ENCODE measurements at regions of chr6 and their contacts with region 1.

Region 1: DNA sequence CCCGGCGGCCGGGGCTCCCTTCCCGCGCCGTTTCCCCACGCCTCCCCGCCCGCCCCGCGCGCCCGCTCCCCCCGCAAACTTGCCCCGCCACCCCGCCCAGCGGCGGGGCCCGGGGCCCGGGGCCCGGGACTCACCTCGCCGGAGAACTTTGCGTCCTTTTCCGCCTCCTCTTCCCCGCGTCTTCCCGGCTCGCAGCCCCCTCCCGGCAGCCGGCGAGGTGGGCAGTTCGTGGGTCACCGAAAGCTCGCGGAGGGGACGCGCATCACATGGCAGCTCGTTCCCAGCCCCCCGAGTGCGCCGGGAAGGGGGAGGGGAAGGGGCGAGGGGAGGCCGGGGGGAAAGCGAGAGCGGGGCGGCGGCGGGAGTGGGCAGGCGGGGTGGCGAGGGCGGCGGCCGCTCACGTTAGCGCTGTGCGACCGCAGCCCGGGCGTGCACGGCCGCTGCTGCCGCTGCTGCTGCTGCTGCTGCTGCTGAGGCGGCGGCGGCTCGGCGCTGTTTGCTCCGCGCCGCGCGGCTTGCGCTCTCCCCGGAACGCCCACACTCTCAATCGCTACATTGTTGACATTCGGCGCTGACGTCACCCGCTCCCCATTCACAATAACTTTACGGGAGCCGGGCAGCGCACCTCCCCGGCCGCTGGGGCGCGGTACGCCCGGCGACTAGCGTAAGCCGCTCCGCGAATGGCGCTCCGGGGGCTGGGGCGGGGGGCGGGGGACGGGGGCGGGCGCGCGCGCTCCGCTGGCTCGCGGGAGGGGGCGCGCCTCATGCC is at the start of gene BACH2:
- DNase-seq: peak; percentile 84 to 97 (median 94)
- ATAC-seq: peak; percentile 85
- H3K4me3 ChIP-seq: peak within 1 kb of the TSS; percentile 59
- H3K4me3 Mint-ChIP-seq: peak within 1 kb of the TSS; percentile 79 to 97 (median 92)
- H3K27ac ChIP-seq: peak within 1 kb of the TSS; percentile 95
- H3K27ac Mint-ChIP-seq: peak within 1 kb of the TSS; percentile 89 to 100 (median 97)
- H3K4me1 ChIP-seq: peaks cover 7 to 26% of the 10 kb centered on the region in 2 donors
- H3K4me1 Mint-ChIP-seq: peaks cover 0 to 47% (median 38%) of the 10 kb centered on the region in 7 donors
- H3K27me3 ChIP-seq: no peaks in the 10 kb centered on the region
- H3K27me3 Mint-ChIP-seq: peaks cover 0 to 29% (median 0%) of the 10 kb centered on the region in 5 donors
- total RNA-seq, gene BACH2: 33.0 to 193 (median 133) TPM

Region 2: GRCh38 chr6:89940225-89941027 is 356.1 kb before region 1 on chr6:
- CTCF ChIA-PET with region 1: interaction called, 11 read pairs
- POLR2A ChIA-PET with region 1: interaction called, 4 read pairs
- intact Hi-C with region 1: loop called (anchors 1 to 2 kb)
- DNase-seq: peak; percentile 22 to 80 (median 70)
- ATAC-seq: peak; percentile 90
- H3K4me3 ChIP-seq: no peak overlapping the region
- H3K4me3 Mint-ChIP-seq: peak overlapping the region in 1 of 10 donors; percentile 48
- H3K27ac ChIP-seq: peak overlapping the region; percentile 53
- H3K27ac Mint-ChIP-seq: peak overlapping the region in 8 of 9 donors; percentile 50 to 91 (median 78)
- H3K4me1 ChIP-seq: peaks cover 0 to 9% of the 10 kb centered on the region in 2 donors
- H3K4me1 Mint-ChIP-seq: peaks cover 6 to 75% (median 39%) of the 10 kb centered on the region in 7 donors
- H3K27me3 ChIP-seq: no peaks in the 10 kb centered on the region
- H3K27me3 Mint-ChIP-seq: no peaks in the 10 kb centered on the region

Region 3: GRCh38 chr6:90179190-90180169 is 117.0 kb before region 1 on chr6:
- CTCF ChIA-PET with region 1: interaction called, 11 read pairs
- POLR2A ChIA-PET with region 1: interaction called, 8 read pairs
- intact Hi-C with region 1: no loop called
- DNase-seq: peak in 3 of 9 donors; percentile 39 to 53 (median 43)
- ATAC-seq: no peak
- H3K4me3 ChIP-seq: no peak overlapping the region
- H3K4me3 Mint-ChIP-seq: peak overlapping the region in 5 of 10 donors; percentile 8 to 83 (median 72)
- H3K27ac ChIP-seq: peak overlapping the region; percentile 64
- H3K27ac Mint-ChIP-seq: peak overlapping the region in 8 of 9 donors; percentile 58 to 97 (median 88)
- H3K4me1 ChIP-seq: peaks cover 0 to 69% of the 10 kb centered on the region in 2 donors
- H3K4me1 Mint-ChIP-seq: peaks cover 49 to 92% (median 86%) of the 10 kb centered on the region in 7 donors
- H3K27me3 ChIP-seq: no peaks in the 10 kb centered on the region
- H3K27me3 Mint-ChIP-seq: no peaks in the 10 kb centered on the region

Region 4: DNA sequence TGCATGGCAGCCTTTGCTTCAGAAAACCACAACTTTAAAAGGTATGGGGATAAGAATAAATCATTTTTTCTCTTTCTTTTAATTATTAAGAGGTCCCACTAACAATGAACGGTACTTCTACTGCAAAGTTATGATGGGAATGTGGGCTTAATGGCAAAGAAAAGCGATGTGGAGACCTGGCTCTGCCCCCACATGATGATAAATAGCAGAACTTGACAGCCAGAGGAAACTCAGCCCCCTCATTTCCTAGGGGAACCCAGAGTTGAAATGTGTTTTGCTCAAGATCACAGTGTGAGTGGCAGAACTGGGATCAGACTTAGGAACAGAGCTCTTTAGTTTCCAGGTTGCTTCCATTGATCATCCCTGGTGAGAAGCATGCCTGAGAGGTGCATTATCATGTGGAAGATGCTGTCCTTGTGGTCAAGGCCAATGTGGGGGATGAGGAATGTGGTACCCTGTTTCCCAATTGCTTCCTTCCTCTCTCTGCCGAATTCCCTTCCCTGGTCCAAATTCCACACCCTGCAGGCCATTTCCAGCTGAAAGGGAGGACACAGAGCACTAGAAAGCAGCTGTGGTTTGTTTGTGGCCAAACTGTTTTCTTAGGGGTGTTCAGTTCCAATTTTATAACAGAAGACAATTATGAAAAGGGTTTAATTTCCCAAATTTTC is 65.8 kb before region 1 on chr6:
- CTCF ChIA-PET with region 1: interaction called, 4 read pairs
- POLR2A ChIA-PET with region 1: interaction called, 4 read pairs
- intact Hi-C with region 1: loop called (anchors 1 to 2 kb)
- DNase-seq: no peak
- ATAC-seq: no peak
- H3K4me3 ChIP-seq: no peak overlapping the region
- H3K4me3 Mint-ChIP-seq: peak overlapping the region; percentile 40 to 82 (median 56)
- H3K27ac ChIP-seq: peak overlapping the region; percentile 88
- H3K27ac Mint-ChIP-seq: peak overlapping the region; percentile 42 to 99 (median 95)
- H3K4me1 ChIP-seq: peaks cover 24 to 97% of the 10 kb centered on the region in 2 donors
- H3K4me1 Mint-ChIP-seq: peaks cover 54 to 100% (median 98%) of the 10 kb centered on the region in 7 donors
- H3K27me3 ChIP-seq: no peaks in the 10 kb centered on the region
- H3K27me3 Mint-ChIP-seq: peaks cover 0 to 2% (median 0%) of the 10 kb centered on the region in 5 donors

Region 5: GRCh38 chr6:90285611-90286381 is 10.7 kb before region 1 on chr6:
- CTCF ChIA-PET with region 1: interaction called, 3 read pairs
- POLR2A ChIA-PET with region 1: interaction called, 54 read pairs
- intact Hi-C with region 1: loop called (anchors 1 kb)
- DNase-seq: peak in 8 of 9 donors; percentile 53 to 87 (median 74)
- ATAC-seq: peak; percentile 68
- H3K4me3 ChIP-seq: peak overlapping the region; percentile 51
- H3K4me3 Mint-ChIP-seq: peak overlapping the region; percentile 83 to 94 (median 88)
- H3K27ac ChIP-seq: peak overlapping the region; percentile 81
- H3K27ac Mint-ChIP-seq: peak overlapping the region; percentile 89 to 100 (median 96)
- H3K4me1 ChIP-seq: peaks cover 21 to 72% of the 10 kb centered on the region in 2 donors
- H3K4me1 Mint-ChIP-seq: peaks cover 54 to 96% (median 92%) of the 10 kb centered on the region in 7 donors
- H3K27me3 ChIP-seq: no peaks in the 10 kb centered on the region
- H3K27me3 Mint-ChIP-seq: peaks cover 0 to 2% (median 0%) of the 10 kb centered on the region in 5 donors

Region 6: GRCh38 chr6:90586836-90587638 is 290.5 kb after region 1 on chr6 and contains the start of gene MAP3K7:
- CTCF ChIA-PET with region 1: no interaction called
- POLR2A ChIA-PET with region 1: no interaction called
- intact Hi-C with region 1: loop called in 1 of 2 experiments (anchors 2 kb)
- DNase-seq: peak; percentile 83 to 96 (median 93)
- ATAC-seq: peak; percentile 90
- H3K4me3 ChIP-seq: peak within 1 kb of the TSS; percentile 88
- H3K4me3 Mint-ChIP-seq: peak within 1 kb of the TSS; percentile 92 to 99 (median 96)
- H3K27ac ChIP-seq: peak within 1 kb of the TSS; percentile 93
- H3K27ac Mint-ChIP-seq: peak within 1 kb of the TSS; percentile 93 to 100 (median 99)
- H3K4me1 ChIP-seq: peaks cover 17 to 22% of the 10 kb centered on the region in 2 donors
- H3K4me1 Mint-ChIP-seq: peaks cover 24 to 49% (median 45%) of the 10 kb centered on the region in 7 donors
- H3K27me3 ChIP-seq: no peaks in the 10 kb centered on the region
- H3K27me3 Mint-ChIP-seq: peaks cover 5 to 36% (median 11%) of the 10 kb centered on the region in 5 donors
- total RNA-seq, gene MAP3K7: 16.1 to 38.5 (median 29.9) TPM

Measured in naive thymus-derived CD4-positive, alpha-beta T cell (primary cell).